ENCODE measurements at regions of chr5 and their contacts with region 1.

Region 1: GRCh38 chr5:78648359-78649210 is at the start of gene LHFPL2:
- DNase-seq: peak; percentile 78 to 86 (median 81)
- H3K4me3 ChIP-seq: peak within 1 kb of the TSS; percentile 52 to 89 (median 80)
- H3K27ac ChIP-seq: peak within 1 kb of the TSS; percentile 84 to 96 (median 94)
- H3K4me1 ChIP-seq: peaks cover 4 to 31% of the 10 kb centered on the region in 2 donors
- H3K27me3 ChIP-seq: no peaks in the 10 kb centered on the region
- CTCF ChIP-seq: no peak
- POLR2A ChIP-seq: peak in 1 of 2 donors; percentile 72
- total RNA-seq, gene LHFPL2: 14.8 to 68.4 (median 56.6) TPM

Region 2: GRCh38 chr5:78547731-78548615 is 100.6 kb before region 1 on chr5:
- intact Hi-C with region 1: loop called in 1 of 2 experiments (anchors 10 kb)
- DNase-seq: peak in 6 of 7 donors; percentile 53 to 77 (median 60)
- H3K4me3 ChIP-seq: no peak overlapping the region
- H3K27ac ChIP-seq: peak overlapping the region in 4 of 5 donors; percentile 26 to 87 (median 56)
- H3K4me1 ChIP-seq: peaks cover 19 to 42% of the 10 kb centered on the region in 2 donors
- H3K27me3 ChIP-seq: no peaks in the 10 kb centered on the region
- CTCF ChIP-seq: no peak
- POLR2A ChIP-seq: no peak

Region 3: GRCh38 chr5:78574731-78575161 is 73.8 kb before region 1 on chr5:
- intact Hi-C with region 1: loop called in 1 of 2 experiments (anchors 10 kb)
- DNase-seq: peak in 3 of 7 donors; percentile 37 to 55 (median 48)
- H3K4me3 ChIP-seq: no peak overlapping the region
- H3K27ac ChIP-seq: peak overlapping the region in 3 of 5 donors; percentile 16 to 68 (median 66)
- H3K4me1 ChIP-seq: peaks cover 15 to 33% of the 10 kb centered on the region in 2 donors
- H3K27me3 ChIP-seq: no peaks in the 10 kb centered on the region
- CTCF ChIP-seq: no peak
- POLR2A ChIP-seq: no peak

Region 4: DNA sequence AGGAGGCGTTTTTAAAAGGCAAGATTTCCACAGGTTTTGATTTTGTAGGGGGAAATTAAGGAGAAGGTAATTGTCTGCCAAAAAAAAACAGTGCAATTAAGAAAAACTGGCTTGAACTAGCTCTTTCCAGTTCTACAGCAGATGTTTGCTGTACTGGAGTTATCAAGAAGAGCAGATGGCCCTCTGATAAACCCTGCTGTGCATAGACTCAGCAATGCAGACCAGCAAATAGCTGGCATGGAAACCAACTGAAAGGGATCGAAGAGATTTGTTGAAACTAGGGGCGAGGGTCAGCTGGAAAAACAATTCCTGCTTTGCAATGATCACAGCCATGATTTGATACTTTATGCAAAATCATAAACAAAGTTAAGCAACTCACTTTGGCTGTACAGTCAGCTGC is 445.2 kb after region 1 on chr5:
- intact Hi-C with region 1: no loop called
- DNase-seq: no peak
- H3K4me3 ChIP-seq: no peak overlapping the region
- H3K27ac ChIP-seq: no peak overlapping the region
- H3K4me1 ChIP-seq: no peaks in the 10 kb centered on the region
- H3K27me3 ChIP-seq: no peaks in the 10 kb centered on the region
- CTCF ChIP-seq: no peak
- POLR2A ChIP-seq: no peak

Measured in adrenal gland (tissue), 19 donors.